Activated CD4-positive, alpha-beta memory T cell treated with anti-CD3 and anti-CD28 coated beads for 36 hours (primary cell): ENCODE measurements at regions of chr16 and their contacts with region 1.

Region 1: GRCh38 chr16:81901483-81901882 is 109.8 kb downstream of the SDR42E1 start:
- DNase-seq: no peak
- H3K4me3 Mint-ChIP-seq: no peak overlapping the region
- H3K27ac Mint-ChIP-seq: no peak overlapping the region
- H3K4me1 Mint-ChIP-seq: no peaks in the 10 kb centered on the region
- H3K27me3 Mint-ChIP-seq: no peaks in the 10 kb centered on the region

Region 2: DNA sequence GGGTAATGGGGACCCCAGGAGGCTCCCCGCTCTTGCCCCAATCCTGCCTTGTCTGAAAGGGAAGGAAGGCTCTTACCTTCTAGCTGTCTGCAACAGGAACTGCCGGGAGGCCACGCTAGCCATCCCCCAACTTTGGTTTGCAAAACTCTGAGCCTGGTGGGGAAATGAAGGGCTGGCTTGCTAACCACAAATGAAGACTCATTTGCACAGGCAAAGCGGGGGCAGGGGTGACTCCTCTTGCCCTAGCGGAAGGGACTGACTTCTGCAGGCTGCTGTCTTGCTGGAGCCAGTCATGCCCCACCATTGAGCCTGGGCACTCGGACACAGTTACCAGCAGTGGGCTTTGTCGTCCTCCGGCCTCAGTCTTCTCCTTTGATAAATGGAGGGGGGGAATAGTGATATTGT is 69.8 kb before region 1 on chr16:
- CTCF ChIA-PET with region 1: no interaction called
- POLR2A ChIA-PET with region 1: no interaction called
- intact Hi-C with region 1: no loop called
- DNase-seq: peak; percentile 69
- H3K4me3 Mint-ChIP-seq: no peak overlapping the region
- H3K27ac Mint-ChIP-seq: no peak overlapping the region
- H3K4me1 Mint-ChIP-seq: peaks cover 11% of the 10 kb centered on the region
- H3K27me3 Mint-ChIP-seq: no peaks in the 10 kb centered on the region

Region 3: GRCh38 chr16:81940781-81941560 is 39.5 kb after region 1 on chr16:
- CTCF ChIA-PET with region 1: no interaction called
- POLR2A ChIA-PET with region 1: no interaction called
- intact Hi-C with region 1: no loop called
- DNase-seq: peak; percentile 18
- H3K4me3 Mint-ChIP-seq: no peak overlapping the region
- H3K27ac Mint-ChIP-seq: no peak overlapping the region
- H3K4me1 Mint-ChIP-seq: no peaks in the 10 kb centered on the region
- H3K27me3 Mint-ChIP-seq: no peaks in the 10 kb centered on the region

Region 4: DNA sequence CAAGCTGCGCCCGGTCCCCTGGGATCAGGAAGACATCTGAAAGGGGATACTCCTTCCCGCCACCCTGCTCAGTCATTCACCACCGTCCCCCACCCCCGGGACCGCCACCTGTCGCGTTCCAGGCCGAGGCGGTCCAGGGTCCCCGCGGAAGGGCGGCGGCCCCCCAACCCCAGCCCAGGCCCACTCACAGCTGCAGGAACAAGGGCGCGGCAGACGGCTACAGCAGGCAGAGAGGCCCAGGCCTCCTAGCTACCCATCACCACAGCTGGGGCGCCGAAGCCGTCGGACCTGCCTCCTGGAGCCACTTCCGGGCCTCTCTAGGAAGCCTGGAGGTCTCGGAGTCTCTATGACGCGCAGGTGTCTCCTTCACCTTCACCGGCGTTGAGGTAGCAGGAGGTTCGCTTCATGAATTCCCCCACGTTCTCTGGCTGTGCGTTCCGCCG is 109.7 kb after region 1 on chr16 and contains the start of gene SDR42E1:
- CTCF ChIA-PET with region 1: no interaction called
- POLR2A ChIA-PET with region 1: no interaction called
- intact Hi-C with region 1: loop called (anchors 10 kb)
- DNase-seq: peak; percentile 76
- H3K4me3 Mint-ChIP-seq: peak within 1 kb of the TSS; percentile 79
- H3K27ac Mint-ChIP-seq: peak within 1 kb of the TSS; percentile 84
- H3K4me1 Mint-ChIP-seq: peaks cover 19% of the 10 kb centered on the region
- H3K27me3 Mint-ChIP-seq: peaks cover 7% of the 10 kb centered on the region
- total RNA-seq, gene SDR42E1: 4.1 to 4.9 TPM